Posterior cingulate gyrus (tissue), 11 donors: ENCODE measurements at regions of chr13 and their contacts with region 1.

Region 1: DNA sequence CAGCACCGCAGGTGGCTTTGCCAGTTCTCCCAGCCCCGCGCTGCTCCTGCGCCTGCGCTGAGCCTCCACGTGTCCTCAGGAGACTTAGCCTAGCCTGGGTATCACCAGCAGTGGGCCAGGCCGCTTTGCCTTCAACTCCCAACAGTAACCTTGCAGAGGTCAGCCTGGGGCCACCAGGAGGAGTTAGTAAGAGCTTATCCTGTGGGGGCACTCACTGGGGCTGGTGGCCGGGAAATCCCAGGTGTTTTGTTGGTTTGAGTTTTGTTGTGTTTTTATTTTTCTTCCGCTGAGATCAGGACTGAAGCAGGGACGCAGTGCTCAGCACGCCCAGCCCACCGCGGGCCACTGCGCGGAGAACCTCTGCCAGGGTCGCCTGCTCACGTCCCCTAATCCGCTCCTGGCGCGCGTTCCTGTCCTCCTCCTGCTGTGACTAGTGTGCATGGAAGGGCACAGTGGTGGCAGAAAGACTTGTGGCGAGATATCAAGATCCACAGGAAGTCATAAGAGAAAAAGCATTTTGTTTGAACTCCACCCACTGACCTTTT is 207.4 kb upstream of the RFC3 start:
- DNase-seq: peak; percentile 59 to 96 (median 76)

Region 2: DNA sequence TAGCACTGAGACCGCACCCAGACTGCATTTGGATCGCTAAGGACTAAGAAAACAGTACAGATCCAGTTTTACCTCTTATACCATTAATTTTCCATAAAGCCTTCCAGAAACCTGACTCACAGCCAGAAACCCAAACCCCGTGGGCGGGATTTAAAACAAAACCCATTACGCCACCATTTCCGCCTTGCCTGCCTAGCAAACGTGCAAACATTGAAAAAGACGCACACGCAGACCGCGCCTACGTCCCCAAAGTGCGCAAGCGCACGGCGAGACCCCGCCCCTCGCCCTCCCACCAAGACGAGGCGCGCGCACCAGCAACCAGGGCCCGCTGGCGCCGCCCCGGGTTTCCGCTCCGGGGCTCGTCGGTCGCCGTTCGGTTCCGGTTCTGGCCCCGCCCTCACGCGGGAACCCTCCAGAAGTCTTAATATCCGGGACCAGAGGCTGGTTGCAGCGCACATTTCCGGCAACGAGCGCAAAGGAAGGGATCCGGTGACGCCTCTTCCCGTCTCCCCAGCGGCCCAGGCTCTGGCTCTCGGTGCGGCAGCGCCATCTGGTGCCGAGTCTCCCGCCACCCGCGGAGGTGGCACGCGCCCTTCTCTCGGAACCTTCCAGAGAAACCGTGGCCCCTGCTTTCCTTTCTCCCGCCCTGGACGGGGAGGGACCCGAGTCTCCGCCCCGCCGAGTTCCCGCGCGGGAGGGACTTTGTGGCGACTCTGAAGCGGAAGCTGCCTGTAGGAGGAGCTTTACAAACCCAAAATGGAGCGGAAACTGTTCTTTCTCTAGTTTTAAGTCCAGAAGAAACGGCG is 68.1 kb before region 1 on chr13:
- intact Hi-C with region 1: loop called (anchors 5 kb)
- DNase-seq: peak; percentile 94 to 99 (median 96)

Region 3: DNA sequence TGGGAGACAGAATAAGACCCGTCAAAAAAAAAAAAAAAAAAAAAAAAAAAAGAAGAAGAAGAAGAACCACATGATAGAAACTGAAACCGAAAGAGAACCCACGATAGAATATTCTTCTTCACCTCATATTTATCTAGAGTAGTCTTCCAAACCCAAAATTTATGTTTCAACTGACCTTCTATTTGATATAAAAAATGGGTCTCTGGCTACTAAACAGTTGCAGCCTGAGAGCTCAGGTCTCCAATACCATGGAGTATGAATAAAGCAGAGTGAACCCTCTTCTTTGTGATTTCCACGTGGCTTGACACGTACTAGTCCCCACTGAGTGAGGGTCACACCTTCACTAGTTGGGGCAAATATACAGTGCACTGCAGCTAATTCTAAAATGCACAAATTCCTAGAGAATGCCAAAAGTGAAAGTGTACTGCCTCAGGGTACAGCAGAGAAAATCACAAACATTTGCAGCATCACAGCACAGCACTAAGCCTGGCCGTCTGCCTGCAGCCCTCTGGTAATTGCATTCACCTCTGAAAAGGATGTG is 176.6 kb after region 1 on chr13:
- intact Hi-C with region 1: no loop called
- DNase-seq: no peak